Mammary epithelial cell (primary cell): ENCODE measurements at regions of chr2 and their contacts with region 1.

Region 1: DNA sequence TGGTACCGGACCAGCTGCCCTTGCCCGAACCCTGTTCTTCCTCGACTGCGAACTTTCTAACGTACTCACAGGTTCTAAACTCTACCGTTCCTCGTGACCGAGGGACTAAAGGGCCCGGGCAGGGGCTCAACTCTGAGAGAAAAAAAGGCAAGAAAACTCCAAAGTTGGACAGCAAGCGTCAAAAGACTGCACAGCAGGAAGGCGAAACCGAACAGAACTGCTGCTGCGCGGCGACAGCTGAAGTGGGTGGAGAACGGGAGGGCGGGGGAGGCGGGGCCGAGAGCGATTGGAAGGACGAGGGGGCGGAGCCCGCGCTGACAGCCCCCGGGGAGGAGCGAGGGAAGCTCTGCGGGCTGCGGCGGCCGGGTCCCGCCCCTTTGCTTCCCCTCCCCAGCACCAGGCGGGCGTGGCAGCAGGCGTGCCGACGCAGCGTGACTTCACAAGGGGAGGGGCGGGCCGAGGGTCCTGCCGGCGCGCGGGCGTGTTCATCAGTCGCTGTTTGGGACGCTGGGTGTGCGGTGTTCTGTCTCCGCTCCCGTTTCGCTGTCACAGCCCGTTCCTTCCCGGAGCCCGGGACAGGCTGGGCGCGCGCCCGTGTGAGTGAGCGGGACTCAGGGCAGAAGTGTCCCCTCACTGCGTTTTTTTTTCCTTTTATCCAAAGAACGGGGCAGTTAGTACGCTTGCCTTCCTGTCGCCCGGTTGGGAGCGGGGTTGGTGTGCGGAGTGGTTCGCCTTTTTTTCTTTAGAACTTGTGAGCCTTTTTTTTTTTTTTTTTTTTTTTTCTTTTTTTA is at the start of gene NABP1:
- DNase-seq: peak; percentile 97
- H3K4me3 ChIP-seq: peak within 1 kb of the TSS; percentile 66 to 82 (median 78)
- H3K27ac ChIP-seq: peak within 1 kb of the TSS; percentile 93
- H3K4me1 ChIP-seq: peaks cover 23% of the 10 kb centered on the region
- H3K27me3 ChIP-seq: no peaks in the 10 kb centered on the region
- CTCF ChIP-seq: no peak
- total RNA-seq, gene NABP1: 77.7 to 88.2 TPM

Region 2: DNA sequence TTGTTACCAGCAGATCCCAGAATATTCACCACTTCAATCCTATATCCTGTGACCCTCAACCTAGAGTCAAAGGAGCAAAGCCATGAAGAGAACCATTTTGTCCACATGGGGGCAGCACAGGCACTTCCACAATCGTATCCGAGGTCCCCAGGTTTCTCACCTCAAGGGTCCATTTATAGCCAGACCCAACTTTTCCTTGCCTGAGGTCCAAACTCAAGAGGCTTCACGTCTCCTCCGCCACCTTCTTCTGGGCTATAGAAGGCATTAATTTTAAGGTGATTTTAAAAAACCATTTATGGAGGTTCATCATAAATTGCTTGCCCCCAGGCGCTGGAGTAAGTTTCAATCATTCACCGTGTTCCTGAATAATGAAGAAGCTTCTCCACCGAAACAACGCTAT is 111.5 kb before region 1 on chr2:
- CTCF ChIA-PET with region 1: no interaction called
- dilution Hi-C with region 1: no loop called
- in situ Hi-C with region 1: no loop called
- intact Hi-C with region 1: loop called (anchors 1 kb)
- DNase-seq: peak; percentile 38
- H3K4me3 ChIP-seq: no peak overlapping the region
- H3K27ac ChIP-seq: no peak overlapping the region
- H3K4me1 ChIP-seq: no peaks in the 10 kb centered on the region
- H3K27me3 ChIP-seq: no peaks in the 10 kb centered on the region
- CTCF ChIP-seq: peak; percentile 80 to 90

Region 3: DNA sequence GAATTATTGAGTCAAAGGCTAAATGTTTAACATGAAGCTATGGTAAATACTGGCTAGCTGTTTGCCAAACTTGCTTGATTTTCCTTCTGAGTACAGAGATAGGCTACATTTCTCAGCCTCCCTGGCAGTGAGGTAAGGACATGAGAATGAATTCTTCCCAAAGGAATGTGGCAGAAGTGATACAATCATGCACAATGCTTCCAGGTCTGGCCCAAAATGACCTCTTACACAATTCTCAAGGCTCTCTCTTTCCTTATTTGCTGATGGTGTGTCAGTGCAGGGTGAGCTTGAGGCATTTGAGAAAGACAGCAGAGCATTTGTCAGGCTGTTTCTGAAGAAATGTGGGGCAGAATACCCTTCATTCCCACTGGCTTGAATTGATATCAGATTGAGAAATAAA is 95.5 kb before region 1 on chr2:
- CTCF ChIA-PET with region 1: no interaction called
- dilution Hi-C with region 1: no loop called
- in situ Hi-C with region 1: no loop called
- intact Hi-C with region 1: loop called (anchors 2 kb)
- DNase-seq: peak; percentile 77
- H3K4me3 ChIP-seq: no peak overlapping the region
- H3K27ac ChIP-seq: peak overlapping the region; percentile 22
- H3K4me1 ChIP-seq: peaks cover 9% of the 10 kb centered on the region
- H3K27me3 ChIP-seq: no peaks in the 10 kb centered on the region
- CTCF ChIP-seq: no peak

Region 4: GRCh38 chr2:191593622-191594416 is 84.0 kb before region 1 on chr2:
- CTCF ChIA-PET with region 1: no interaction called
- dilution Hi-C with region 1: no loop called
- in situ Hi-C with region 1: no loop called
- intact Hi-C with region 1: loop called (anchors 1 kb)
- DNase-seq: peak; percentile 95
- H3K4me3 ChIP-seq: peak overlapping the region in 1 of 3 experiments; percentile 10
- H3K27ac ChIP-seq: peak overlapping the region; percentile 96
- H3K4me1 ChIP-seq: peaks cover 18% of the 10 kb centered on the region
- H3K27me3 ChIP-seq: no peaks in the 10 kb centered on the region
- CTCF ChIP-seq: no peak

Region 5: DNA sequence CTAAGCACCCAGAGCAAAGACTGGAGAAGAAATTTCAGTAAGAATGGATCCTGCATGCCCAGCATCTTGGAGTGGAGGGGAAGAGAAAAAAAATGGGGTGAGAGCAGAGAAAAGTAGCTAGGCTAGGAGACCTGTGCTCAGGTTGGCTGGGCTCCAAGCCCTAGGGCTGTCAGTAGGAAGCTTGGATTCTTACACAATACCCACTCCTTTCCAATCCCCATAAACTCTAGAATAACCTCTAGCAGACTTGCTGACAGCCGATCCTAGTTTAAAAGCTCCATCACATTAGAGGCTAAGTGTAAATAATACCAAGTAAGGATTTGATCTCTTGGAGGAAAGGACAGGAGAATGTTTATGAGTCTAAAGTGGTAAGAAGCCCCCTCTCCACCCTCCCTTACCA is 46.1 kb before region 1 on chr2:
- CTCF ChIA-PET with region 1: no interaction called
- dilution Hi-C with region 1: loop called (anchors 5 kb)
- in situ Hi-C with region 1: no loop called
- intact Hi-C with region 1: loop called (anchors 5 kb)
- DNase-seq: peak; percentile 67
- H3K4me3 ChIP-seq: no peak overlapping the region
- H3K27ac ChIP-seq: no peak overlapping the region
- H3K4me1 ChIP-seq: peaks cover 53% of the 10 kb centered on the region
- H3K27me3 ChIP-seq: no peaks in the 10 kb centered on the region
- CTCF ChIP-seq: no peak

Region 6: DNA sequence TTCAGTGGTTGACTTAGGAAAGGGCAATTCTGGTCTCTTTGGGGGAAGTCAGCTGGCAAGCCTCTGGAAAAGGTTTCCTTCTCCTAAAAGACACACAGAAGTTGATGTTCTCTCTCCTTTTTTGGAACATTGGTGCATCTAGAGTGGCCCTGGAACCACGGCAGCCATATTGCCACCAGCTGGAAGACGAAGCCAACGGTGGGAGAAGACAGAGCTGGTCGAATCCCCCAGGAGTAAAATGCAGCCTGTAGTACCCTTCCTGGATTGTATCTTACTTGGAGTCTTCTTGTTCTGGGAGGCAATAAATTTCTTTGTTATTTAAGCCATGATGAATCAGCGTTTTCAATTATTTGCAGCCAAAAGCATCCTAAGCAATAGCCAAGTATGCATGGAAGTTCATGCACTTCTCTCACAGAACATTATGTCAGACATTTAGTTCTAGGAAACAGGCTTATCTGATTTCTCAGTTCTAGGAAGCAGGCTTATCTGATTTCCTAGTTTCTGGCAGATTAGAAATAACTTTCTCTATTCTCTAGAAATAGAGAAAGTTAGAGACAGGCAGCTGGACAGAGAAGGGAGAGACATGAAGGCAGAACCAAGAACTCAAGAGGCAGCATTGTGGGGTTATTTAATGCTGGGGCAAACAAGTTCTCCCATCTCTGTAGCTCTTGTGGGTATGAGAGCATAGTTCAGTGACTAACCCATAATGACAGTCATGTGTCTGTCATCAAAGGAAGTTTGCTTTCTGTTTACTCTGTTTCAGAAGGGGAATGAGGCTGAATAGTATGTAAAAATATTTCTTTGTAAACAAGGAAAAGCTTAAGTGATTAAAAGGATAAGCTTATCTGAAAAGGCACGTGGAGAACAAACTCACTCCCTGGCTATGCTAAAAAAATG is 40.4 kb before region 1 on chr2:
- CTCF ChIA-PET with region 1: interaction called, 3 read pairs
- dilution Hi-C with region 1: loop called (anchors 5 kb)
- in situ Hi-C with region 1: no loop called
- intact Hi-C with region 1: loop called (anchors 5 kb)
- DNase-seq: peak; percentile 77
- H3K4me3 ChIP-seq: no peak overlapping the region
- H3K27ac ChIP-seq: peak overlapping the region; percentile 40
- H3K4me1 ChIP-seq: peaks cover 41% of the 10 kb centered on the region
- H3K27me3 ChIP-seq: no peaks in the 10 kb centered on the region
- CTCF ChIP-seq: no peak

Region 7: DNA sequence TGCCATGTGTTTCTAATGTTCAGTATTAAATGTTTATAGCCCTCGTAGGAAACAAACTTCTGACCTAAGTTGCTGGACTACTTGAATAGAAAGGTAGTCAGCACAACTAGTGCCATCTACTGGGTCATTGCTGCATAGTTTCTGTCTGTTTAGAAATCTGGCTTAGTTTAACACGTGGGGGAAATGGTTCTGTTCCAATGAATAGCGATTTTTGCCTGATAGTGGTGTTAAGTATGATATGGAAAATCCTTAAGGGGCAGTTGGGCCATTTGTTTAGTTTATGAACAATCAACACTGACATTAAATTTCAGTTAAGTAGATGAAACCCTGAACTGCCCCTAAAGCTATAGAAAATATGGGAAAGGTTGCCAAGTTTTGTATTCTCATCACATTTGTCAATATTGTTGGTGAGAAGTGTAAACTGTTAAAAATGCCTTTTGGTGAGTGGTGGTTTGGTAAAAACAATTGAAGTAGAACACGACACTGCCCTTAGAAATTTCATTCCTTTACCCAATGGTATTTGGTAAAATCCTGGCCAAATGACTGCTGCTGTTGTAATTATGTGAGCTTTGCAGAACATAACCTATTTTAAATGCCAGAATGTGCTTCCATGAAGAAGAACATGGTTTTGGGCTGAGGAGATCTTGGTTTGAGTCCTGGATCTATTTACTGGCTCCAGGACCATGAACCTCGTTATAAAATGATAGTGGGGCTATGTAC is 13.3 kb after region 1 on chr2:
- CTCF ChIA-PET with region 1: no interaction called
- dilution Hi-C with region 1: no loop called
- in situ Hi-C with region 1: no loop called
- intact Hi-C with region 1: loop called (anchors 1 kb)
- DNase-seq: peak; percentile 63
- H3K4me3 ChIP-seq: no peak overlapping the region
- H3K27ac ChIP-seq: no peak overlapping the region
- H3K4me1 ChIP-seq: peaks cover 40% of the 10 kb centered on the region
- H3K27me3 ChIP-seq: no peaks in the 10 kb centered on the region
- CTCF ChIP-seq: peak; percentile 81 to 85